K562 (cell line): ENCODE measurements at regions of chr1 and their contacts with region 1.

Region 1: GRCh38 chr1:181424786-181425403 is 58.4 kb upstream of the CACNA1E start:
- DNase-seq: peak; percentile 78 to 87 (median 82)
- ATAC-seq: peak; percentile 92
- H3K4me3 ChIP-seq: no peak overlapping the region
- H3K27ac ChIP-seq: no peak overlapping the region
- H3K4me1 ChIP-seq: no peaks in the 10 kb centered on the region
- H3K27me3 ChIP-seq: peaks cover 3 to 8% of the 10 kb centered on the region in 2 experiments; a peak in 4 of 5 replicates
- CTCF ChIP-seq: peak; percentile 99 to 100 (median 100)
- EP300 ChIP-seq: no peak
- POLR2A ChIP-seq: no peak
- RAD21 ChIP-seq: peak; percentile 85 to 92

Region 2: DNA sequence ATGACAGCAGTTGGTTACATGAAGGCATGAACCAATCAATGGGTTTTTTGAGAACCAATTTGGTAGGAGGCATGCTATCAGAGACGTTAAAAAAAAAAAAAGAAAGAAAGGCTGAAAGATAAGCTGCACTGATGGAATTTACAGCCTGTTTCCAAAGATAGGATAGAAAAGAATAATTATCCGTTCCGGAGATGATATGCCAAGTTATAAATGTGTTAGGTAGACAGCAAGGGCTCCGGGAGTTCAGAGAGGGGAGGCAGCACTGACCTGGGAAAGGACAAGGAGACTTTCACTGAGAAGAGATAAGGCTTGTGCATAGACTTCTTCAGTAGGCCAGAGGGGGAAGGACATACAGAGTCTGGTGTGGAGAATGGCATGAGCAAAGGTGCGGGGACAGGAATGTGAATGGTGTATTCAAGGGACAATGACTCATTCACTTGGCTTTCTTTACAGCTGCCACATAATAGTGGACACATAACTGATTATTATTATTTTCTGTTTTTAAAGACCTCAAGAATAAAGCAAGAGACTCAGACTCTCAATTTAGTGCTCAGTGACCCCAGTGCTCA is 897.7 kb before region 1 on chr1:
- CTCF ChIA-PET with region 1: no interaction called
- POLR2A ChIA-PET with region 1: no interaction called
- in situ Hi-C with region 1: loop called (anchors 5 kb)
- intact Hi-C with region 1: no loop called
- DNase-seq: peak; percentile 50 to 84 (median 59)
- ATAC-seq: peak; percentile 84
- H3K4me3 ChIP-seq: no peak overlapping the region
- H3K27ac ChIP-seq: no peak overlapping the region; the same call in 2 of the 3 replicates
- H3K4me1 ChIP-seq: peaks cover 9 to 21% of the 10 kb centered on the region in 2 experiments; a peak in 3 of 5 replicates
- H3K27me3 ChIP-seq: no peaks in the 10 kb centered on the region
- CTCF ChIP-seq: no peak
- EP300 ChIP-seq: no peak; the same call in 1 of the 2 replicates
- POLR2A ChIP-seq: no peak
- RAD21 ChIP-seq: no peak

Region 3: DNA sequence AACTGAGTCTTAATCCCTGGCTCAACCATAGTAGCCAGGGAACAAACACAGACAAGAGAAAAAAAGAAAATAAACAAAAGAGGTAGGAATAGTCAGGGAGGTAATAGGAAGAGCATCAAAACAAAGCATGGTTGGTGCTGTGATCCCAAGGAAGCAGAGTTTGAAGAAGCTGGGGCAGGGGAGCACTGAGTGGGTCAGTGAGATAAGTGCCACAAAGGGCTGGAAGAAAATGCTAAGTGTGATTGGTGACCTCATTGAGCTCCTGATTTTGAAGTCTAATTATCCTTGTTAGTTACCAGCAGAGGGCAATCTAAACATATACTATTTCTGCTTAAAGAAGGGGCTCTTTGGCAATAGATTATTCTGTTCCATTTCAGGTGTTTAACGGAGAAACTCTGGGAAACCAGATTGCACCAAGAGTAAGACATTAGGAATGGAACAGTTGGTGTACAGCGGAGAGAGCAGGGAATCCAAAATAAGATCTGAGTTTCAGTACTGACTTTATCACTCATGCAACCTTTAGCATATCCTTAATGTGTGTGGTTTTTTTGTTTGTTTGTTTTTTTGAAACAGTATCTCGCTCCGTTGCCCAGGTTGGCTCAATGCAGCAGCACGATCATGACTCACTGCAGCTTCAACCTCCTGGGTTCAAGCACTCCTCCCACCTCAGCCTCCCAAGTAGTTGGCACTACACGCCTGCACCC is 542.9 kb before region 1 on chr1:
- CTCF ChIA-PET with region 1: interaction called, 14 read pairs
- POLR2A ChIA-PET with region 1: no interaction called
- in situ Hi-C with region 1: no loop called
- intact Hi-C with region 1: no loop called
- DNase-seq: peak; percentile 52 to 76 (median 68)
- ATAC-seq: peak; percentile 97
- H3K4me3 ChIP-seq: no peak overlapping the region
- H3K27ac ChIP-seq: no peak overlapping the region
- H3K4me1 ChIP-seq: peaks cover 0 to 3% of the 10 kb centered on the region in 2 experiments; a peak in 1 of 5 replicates
- H3K27me3 ChIP-seq: no peaks in the 10 kb centered on the region
- CTCF ChIP-seq: peak; percentile 45 to 80 (median 67); a peak in 5 of 6 replicates
- EP300 ChIP-seq: no peak
- POLR2A ChIP-seq: no peak
- RAD21 ChIP-seq: peak; percentile 85 to 91

Region 4: GRCh38 chr1:181189691-181190363 is 235.1 kb before region 1 on chr1:
- CTCF ChIA-PET with region 1: interaction called, 127 read pairs
- POLR2A ChIA-PET with region 1: no interaction called
- in situ Hi-C with region 1: loop called (anchors 5 kb)
- intact Hi-C with region 1: loop called (anchors 1 kb)
- DNase-seq: peak; percentile 82 to 96 (median 92)
- ATAC-seq: peak; percentile 98
- H3K4me3 ChIP-seq: peak overlapping the region; percentile 22; the same call in 1 of the 2 replicates
- H3K27ac ChIP-seq: no peak overlapping the region
- H3K4me1 ChIP-seq: peaks cover 0 to 7% of the 10 kb centered on the region in 2 experiments; a peak in 3 of 5 replicates
- H3K27me3 ChIP-seq: peaks cover 8 to 36% of the 10 kb centered on the region in 2 experiments
- CTCF ChIP-seq: peak; percentile 97 to 98 (median 98)
- EP300 ChIP-seq: no peak
- POLR2A ChIP-seq: no peak
- RAD21 ChIP-seq: peak; percentile 89 to 96

Region 5: DNA sequence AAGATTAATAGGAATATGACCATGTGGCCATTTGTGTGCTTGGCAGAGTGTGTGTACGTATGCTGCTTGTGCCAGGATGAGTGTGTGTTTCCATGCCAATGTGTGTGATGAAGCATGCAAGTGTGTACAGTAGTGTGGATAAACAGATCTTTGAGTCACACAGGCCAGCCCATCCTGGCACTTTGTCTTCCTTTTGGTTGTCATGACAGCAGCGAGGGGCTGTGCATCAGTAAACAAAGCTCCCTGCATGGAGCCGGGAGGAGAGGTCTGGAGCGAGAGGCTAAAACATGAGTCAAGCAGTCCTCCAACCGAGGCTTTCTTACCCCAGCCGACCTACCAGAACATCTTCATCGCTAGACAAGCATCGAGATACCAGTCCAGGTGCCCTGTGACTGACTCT is 279.7 kb after region 1 on chr1:
- CTCF ChIA-PET with region 1: no interaction called
- POLR2A ChIA-PET with region 1: no interaction called
- in situ Hi-C with region 1: no loop called
- intact Hi-C with region 1: no loop called
- DNase-seq: no peak
- ATAC-seq: no peak
- H3K4me3 ChIP-seq: no peak overlapping the region
- H3K27ac ChIP-seq: no peak overlapping the region
- H3K4me1 ChIP-seq: no peaks in the 10 kb centered on the region
- H3K27me3 ChIP-seq: no peaks in the 10 kb centered on the region
- CTCF ChIP-seq: no peak
- EP300 ChIP-seq: no peak
- POLR2A ChIP-seq: no peak
- RAD21 ChIP-seq: no peak